Right cardiac atrium (tissue), 5 donors: ENCODE measurements at regions of chr18 and their contacts with region 1.

Region 1: GRCh38 chr18:27599202-27599829 is 414.2 kb upstream of the CHST9 start:
- DNase-seq: peak in 2 of 3 donors; percentile 17 to 40
- ATAC-seq: no peak
- H3K4me3 ChIP-seq: no peak overlapping the region
- H3K27ac ChIP-seq: no peak overlapping the region
- H3K4me1 ChIP-seq: no peaks in the 10 kb centered on the region
- H3K27me3 ChIP-seq: no peaks in the 10 kb centered on the region

Region 2: GRCh38 chr18:26362021-26362420 is 1237.3 kb before region 1 on chr18:
- intact Hi-C with region 1: no loop called
- DNase-seq: no peak
- ATAC-seq: no peak
- H3K4me3 ChIP-seq: no peak overlapping the region
- H3K27ac ChIP-seq: no peak overlapping the region
- H3K4me1 ChIP-seq: no peaks in the 10 kb centered on the region
- H3K27me3 ChIP-seq: no peaks in the 10 kb centered on the region

Region 3: DNA sequence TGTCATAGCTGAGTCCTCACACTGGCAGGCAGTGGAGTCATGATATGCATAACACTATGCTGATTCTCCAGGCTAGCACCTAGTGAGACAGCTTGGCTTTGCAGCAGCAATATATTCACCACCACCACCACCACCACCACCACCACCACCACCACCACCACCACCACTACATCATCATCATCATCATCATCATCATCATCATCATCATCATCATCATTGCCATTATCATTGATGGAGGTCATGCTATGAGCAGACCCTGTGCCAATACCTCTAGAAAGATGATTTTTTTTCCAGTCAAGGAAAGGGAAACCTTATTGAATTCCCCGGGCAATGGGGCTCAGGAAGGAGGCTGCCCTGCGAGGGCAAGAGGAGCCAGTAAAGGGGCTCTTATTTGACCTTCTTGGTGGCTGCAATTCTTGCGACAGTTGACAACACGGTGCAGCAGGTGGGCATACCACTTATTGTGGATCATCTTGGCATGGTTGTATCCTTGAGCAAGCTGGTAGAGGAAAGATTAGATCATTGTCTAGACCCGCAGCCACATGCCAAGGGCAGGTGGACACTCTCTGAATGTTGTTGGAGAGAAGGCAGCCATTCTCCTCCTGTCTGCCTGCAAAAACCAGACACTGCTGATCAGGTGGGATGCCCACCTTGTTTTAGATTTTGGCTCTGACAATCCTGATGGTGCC is 244.2 kb before region 1 on chr18:
- intact Hi-C with region 1: loop called in 3 of 4 experiments (anchors 5 to 10 kb)
- DNase-seq: no peak
- ATAC-seq: no peak
- H3K4me3 ChIP-seq: no peak overlapping the region
- H3K27ac ChIP-seq: no peak overlapping the region
- H3K4me1 ChIP-seq: no peaks in the 10 kb centered on the region
- H3K27me3 ChIP-seq: no peaks in the 10 kb centered on the region

Region 4: GRCh38 chr18:27363872-27364271 is 235.4 kb before region 1 on chr18:
- intact Hi-C with region 1: loop called (anchors 2 to 10 kb)
- DNase-seq: no peak
- ATAC-seq: no peak
- H3K4me3 ChIP-seq: no peak overlapping the region
- H3K27ac ChIP-seq: no peak overlapping the region
- H3K4me1 ChIP-seq: no peaks in the 10 kb centered on the region
- H3K27me3 ChIP-seq: no peaks in the 10 kb centered on the region

Region 5: DNA sequence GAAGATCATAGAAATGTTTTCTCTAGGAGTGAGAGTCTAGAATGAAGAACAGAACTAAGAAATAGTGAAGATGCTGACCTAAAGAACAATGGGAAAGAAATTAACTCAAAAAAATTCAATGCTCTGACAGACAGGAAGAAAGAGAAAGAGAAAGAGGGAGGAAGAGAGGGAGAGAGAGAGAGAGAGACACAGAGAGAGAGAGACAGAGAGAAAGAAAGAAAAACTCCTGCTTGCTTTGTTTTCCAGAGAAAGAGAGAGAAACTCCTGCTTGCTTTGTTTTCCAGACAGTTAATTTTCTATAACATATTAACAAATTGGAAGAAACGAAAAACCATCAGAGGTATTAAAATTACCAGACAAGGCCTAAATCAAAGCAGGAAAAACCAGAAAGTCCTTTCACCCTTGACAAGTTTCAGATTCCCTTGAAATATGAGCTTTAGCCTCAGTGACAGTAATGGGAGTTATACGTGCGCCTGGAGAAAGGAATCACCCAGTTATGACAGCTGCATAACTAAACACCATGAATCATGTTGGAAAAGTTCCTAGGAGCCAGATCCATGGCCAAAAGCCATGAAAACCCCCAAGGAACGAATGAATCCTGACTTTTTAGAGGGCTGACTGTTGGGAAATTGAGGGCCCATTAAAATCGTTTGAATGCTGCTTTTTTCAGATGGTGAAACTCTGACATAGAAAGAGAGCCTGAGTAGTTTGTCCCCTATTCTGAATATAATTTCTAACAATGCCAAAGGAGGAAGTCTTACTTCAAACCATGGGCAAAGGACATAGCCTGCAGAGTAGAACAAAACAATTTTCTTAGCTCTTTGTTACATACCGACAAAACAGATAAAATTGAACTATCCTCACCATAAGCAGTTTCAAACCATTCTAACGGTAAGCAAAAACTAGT is 185.6 kb before region 1 on chr18:
- intact Hi-C with region 1: no loop called
- DNase-seq: peak in 1 of 3 donors; percentile 27
- ATAC-seq: peak; percentile 72 to 82
- H3K4me3 ChIP-seq: no peak overlapping the region
- H3K27ac ChIP-seq: no peak overlapping the region
- H3K4me1 ChIP-seq: no peaks in the 10 kb centered on the region
- H3K27me3 ChIP-seq: no peaks in the 10 kb centered on the region

Region 6: DNA sequence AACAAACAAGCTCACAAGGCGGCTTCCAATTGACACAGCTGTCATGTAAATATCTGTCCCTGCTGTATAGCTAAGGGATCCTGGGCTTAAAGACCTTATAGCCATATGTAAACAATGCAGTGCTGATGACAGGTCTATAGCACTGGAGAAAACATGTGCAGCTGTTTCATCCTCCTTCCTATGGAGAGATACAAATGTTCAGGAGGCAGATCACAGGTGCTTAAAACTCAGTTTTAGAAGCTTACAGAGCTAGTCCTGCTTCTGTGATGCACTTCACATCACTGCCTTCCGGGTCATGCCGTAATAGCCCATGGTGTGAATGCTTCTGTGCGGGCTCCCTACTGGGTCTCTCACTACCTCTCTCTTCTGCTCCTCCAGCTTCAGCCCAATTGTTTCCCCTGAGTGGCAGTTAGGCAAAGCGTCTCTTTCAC is 151.8 kb before region 1 on chr18:
- intact Hi-C with region 1: no loop called
- DNase-seq: no peak
- ATAC-seq: no peak
- H3K4me3 ChIP-seq: no peak overlapping the region
- H3K27ac ChIP-seq: no peak overlapping the region
- H3K4me1 ChIP-seq: no peaks in the 10 kb centered on the region
- H3K27me3 ChIP-seq: no peaks in the 10 kb centered on the region